ENCODE measurements at regions of chr22 and their contacts with region 1.

Region 1: DNA sequence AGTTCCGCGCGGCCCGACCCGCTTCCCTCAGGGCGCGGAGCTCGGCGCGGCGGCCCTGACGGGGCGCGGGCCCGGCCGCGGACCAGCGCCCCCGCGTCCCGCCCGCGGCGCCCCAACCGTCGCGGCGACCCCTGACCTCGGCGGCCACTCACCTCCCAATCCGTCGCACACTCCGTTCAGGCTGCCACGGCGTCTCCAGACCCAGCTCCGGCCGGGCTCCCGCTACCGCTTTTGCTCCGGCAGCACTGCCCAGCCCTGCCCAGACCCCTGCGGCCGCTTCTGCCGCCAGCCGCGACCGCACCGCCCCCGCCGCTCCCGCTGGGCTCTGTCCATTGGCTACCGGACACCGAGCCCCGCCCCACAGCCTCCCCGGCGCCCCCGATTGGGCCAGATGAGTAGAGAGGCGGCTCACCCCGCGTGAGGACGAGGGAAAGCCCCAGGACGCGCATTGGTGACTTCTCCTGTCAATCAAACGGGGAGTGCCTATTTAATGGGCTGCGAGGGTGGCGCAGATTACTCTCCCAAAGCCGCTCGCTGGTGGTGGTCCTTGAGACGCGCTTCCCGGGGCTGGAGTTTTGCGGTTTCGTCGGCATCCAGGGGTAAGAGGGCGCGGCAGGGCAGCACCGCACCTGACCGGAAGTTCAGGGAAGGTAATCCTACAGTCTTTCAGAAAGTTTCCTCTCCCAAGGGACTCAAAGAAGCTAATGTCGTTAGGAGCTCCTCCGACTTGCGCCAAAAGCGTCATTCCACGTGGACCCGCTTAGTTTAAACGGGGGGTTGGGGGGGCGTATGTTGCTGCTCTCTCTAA is at the start of gene PACSIN2:
- DNase-seq: peak; percentile 99 to 100
- H3K4me3 ChIP-seq: peak within 1 kb of the TSS; percentile 83
- H3K4me3 Mint-ChIP-seq: peak within 1 kb of the TSS; percentile 95
- H3K27ac Mint-ChIP-seq: peak within 1 kb of the TSS; percentile 96
- H3K4me1 ChIP-seq: peaks cover 55% of the 10 kb centered on the region
- H3K4me1 Mint-ChIP-seq: peaks cover 26% of the 10 kb centered on the region
- H3K27me3 ChIP-seq: no peaks in the 10 kb centered on the region
- H3K27me3 Mint-ChIP-seq: no peaks in the 10 kb centered on the region
- CTCF ChIP-seq: no peak
- total RNA-seq, gene PACSIN2: 122 and 126 TPM in 2 replicates

Region 2: GRCh38 chr22:42959576-42960509 is 55.2 kb before region 1 on chr22:
- CTCF ChIA-PET with region 1: interaction called, 5 read pairs
- POLR2A ChIA-PET with region 1: no interaction called
- intact Hi-C with region 1: loop called (anchors 10 kb)
- DNase-seq: peak; percentile 80 to 81
- H3K4me3 ChIP-seq: 0 out of 2 replicates have a peak overlapping the region, but pooled peaks have one; percentile 4
- H3K4me3 Mint-ChIP-seq: peak overlapping the region; percentile 78
- H3K27ac Mint-ChIP-seq: peak overlapping the region; percentile 90
- H3K4me1 ChIP-seq: peaks cover 44% of the 10 kb centered on the region
- H3K4me1 Mint-ChIP-seq: peaks cover 52% of the 10 kb centered on the region
- H3K27me3 ChIP-seq: no peaks in the 10 kb centered on the region
- H3K27me3 Mint-ChIP-seq: no peaks in the 10 kb centered on the region
- CTCF ChIP-seq: no peak

Region 3: GRCh38 chr22:42994881-42995562 is 20.1 kb before region 1 on chr22:
- CTCF ChIA-PET with region 1: interaction called, 5 read pairs
- POLR2A ChIA-PET with region 1: interaction called, 48 read pairs
- intact Hi-C with region 1: loop called (anchors 1 kb)
- DNase-seq: peak; percentile 79 to 81
- H3K4me3 ChIP-seq: peak overlapping the region; percentile 28
- H3K4me3 Mint-ChIP-seq: peak overlapping the region; percentile 82
- H3K27ac Mint-ChIP-seq: peak overlapping the region; percentile 99
- H3K4me1 ChIP-seq: peaks cover 71% of the 10 kb centered on the region
- H3K4me1 Mint-ChIP-seq: peaks cover 55% of the 10 kb centered on the region
- H3K27me3 ChIP-seq: no peaks in the 10 kb centered on the region
- H3K27me3 Mint-ChIP-seq: no peaks in the 10 kb centered on the region
- CTCF ChIP-seq: no peak

Region 4: GRCh38 chr22:43001271-43002201 is 13.5 kb before region 1 on chr22:
- CTCF ChIA-PET with region 1: interaction called, 3 read pairs
- POLR2A ChIA-PET with region 1: interaction called, 17 read pairs
- intact Hi-C with region 1: loop called (anchors 1 kb)
- DNase-seq: no peak
- H3K4me3 ChIP-seq: no peak overlapping the region
- H3K4me3 Mint-ChIP-seq: peak overlapping the region; percentile 40
- H3K27ac Mint-ChIP-seq: peak overlapping the region; percentile 85
- H3K4me1 ChIP-seq: peaks cover 78% of the 10 kb centered on the region
- H3K4me1 Mint-ChIP-seq: peaks cover 47% of the 10 kb centered on the region
- H3K27me3 ChIP-seq: no peaks in the 10 kb centered on the region
- H3K27me3 Mint-ChIP-seq: no peaks in the 10 kb centered on the region
- CTCF ChIP-seq: no peak

Region 5: DNA sequence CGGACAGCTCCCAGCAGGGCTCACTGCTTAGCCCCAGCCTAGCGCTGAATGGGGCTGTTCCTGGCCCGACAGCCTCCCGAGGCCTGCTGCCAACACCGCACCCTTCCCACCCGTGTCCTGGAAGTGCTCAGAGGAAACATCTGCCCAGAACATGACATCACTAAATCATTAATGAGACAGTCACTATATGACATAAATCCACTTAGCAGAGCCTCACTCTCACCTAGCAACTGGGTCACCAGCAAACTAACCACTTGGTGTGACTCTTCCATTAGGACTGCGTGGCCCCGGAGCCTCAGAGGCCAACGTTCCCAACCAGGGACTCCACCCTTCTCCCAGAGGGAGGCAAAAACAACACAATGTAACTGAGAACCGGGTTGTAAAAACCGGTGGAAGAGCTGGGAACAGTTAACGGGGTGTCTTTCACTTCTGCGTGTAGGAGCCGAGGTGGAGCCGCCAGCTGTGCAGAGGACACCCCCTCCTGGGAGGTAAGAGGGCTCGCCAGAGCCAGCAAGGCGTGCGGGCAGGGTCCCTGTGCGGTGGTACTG is 21.3 kb after region 1 on chr22:
- CTCF ChIA-PET with region 1: interaction called, 6 read pairs
- POLR2A ChIA-PET with region 1: interaction called, 12 read pairs
- intact Hi-C with region 1: no loop called
- DNase-seq: no peak
- H3K4me3 ChIP-seq: no peak overlapping the region
- H3K4me3 Mint-ChIP-seq: no peak overlapping the region
- H3K27ac Mint-ChIP-seq: no peak overlapping the region
- H3K4me1 ChIP-seq: no peaks in the 10 kb centered on the region
- H3K4me1 Mint-ChIP-seq: no peaks in the 10 kb centered on the region
- H3K27me3 ChIP-seq: no peaks in the 10 kb centered on the region
- H3K27me3 Mint-ChIP-seq: no peaks in the 10 kb centered on the region
- CTCF ChIP-seq: no peak

Region 6: GRCh38 chr22:43088979-43089717 is 74.1 kb after region 1 on chr22 and contains the start of gene TTLL1:
- CTCF ChIA-PET with region 1: no interaction called
- POLR2A ChIA-PET with region 1: interaction called, 3 read pairs
- intact Hi-C with region 1: loop called (anchors 5 kb)
- DNase-seq: peak; percentile 90 to 94
- H3K4me3 ChIP-seq: peak within 1 kb of the TSS; percentile 64
- H3K4me3 Mint-ChIP-seq: peak within 1 kb of the TSS; percentile 91
- H3K27ac Mint-ChIP-seq: peak within 1 kb of the TSS; percentile 82
- H3K4me1 ChIP-seq: no peaks in the 10 kb centered on the region
- H3K4me1 Mint-ChIP-seq: peaks cover 8% of the 10 kb centered on the region
- H3K27me3 ChIP-seq: no peaks in the 10 kb centered on the region
- H3K27me3 Mint-ChIP-seq: no peaks in the 10 kb centered on the region
- CTCF ChIP-seq: no peak
- total RNA-seq, gene TTLL1: 4.1 and 4.4 TPM in 2 replicates

Region 7: DNA sequence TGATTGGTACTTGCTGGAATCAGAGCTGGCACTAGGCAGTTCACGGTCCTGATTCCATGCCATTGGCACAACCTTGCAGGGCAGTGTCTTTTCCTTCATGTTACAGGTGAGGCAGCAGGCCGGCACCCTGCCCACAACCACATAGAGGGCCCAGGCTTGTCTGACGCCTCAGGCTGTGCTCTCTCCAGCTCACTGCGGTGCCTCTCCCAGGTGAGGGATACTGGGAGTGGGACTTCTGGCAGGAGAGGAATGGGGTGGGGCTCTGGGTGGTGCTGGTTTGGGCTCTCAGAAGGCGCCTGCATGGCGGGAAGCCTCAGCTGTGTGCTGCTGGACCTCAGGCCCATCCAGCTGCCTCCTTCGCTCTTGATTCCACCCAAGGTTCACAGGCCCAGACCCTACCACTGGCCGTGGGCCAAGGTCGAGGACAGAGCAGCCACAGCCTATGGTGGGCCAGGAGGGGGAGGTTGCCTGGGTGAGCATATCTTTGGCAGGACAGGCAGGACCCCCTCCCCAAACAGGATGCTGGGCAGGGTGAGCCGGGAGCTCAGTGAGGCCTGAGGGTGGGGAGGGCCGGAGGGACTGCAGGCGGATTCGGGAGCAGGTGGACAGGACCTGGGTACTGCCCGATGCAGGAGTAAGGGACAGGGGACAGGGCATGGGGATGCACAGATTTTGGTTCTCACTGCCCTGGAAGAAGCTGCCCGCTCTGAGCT is 389.8 kb after region 1 on chr22:
- CTCF ChIA-PET with region 1: no interaction called
- POLR2A ChIA-PET with region 1: no interaction called
- intact Hi-C with region 1: no loop called
- DNase-seq: no peak
- H3K4me3 ChIP-seq: no peak overlapping the region
- H3K4me3 Mint-ChIP-seq: no peak overlapping the region
- H3K27ac Mint-ChIP-seq: no peak overlapping the region
- H3K4me1 ChIP-seq: no peaks in the 10 kb centered on the region
- H3K4me1 Mint-ChIP-seq: no peaks in the 10 kb centered on the region
- H3K27me3 ChIP-seq: no peaks in the 10 kb centered on the region
- H3K27me3 Mint-ChIP-seq: peaks cover 8% of the 10 kb centered on the region
- CTCF ChIP-seq: no peak

Measured in Caco-2 (cell line).